K562 (cell line): ENCODE measurements at regions of chr2 and their contacts with region 1.

Region 1: DNA sequence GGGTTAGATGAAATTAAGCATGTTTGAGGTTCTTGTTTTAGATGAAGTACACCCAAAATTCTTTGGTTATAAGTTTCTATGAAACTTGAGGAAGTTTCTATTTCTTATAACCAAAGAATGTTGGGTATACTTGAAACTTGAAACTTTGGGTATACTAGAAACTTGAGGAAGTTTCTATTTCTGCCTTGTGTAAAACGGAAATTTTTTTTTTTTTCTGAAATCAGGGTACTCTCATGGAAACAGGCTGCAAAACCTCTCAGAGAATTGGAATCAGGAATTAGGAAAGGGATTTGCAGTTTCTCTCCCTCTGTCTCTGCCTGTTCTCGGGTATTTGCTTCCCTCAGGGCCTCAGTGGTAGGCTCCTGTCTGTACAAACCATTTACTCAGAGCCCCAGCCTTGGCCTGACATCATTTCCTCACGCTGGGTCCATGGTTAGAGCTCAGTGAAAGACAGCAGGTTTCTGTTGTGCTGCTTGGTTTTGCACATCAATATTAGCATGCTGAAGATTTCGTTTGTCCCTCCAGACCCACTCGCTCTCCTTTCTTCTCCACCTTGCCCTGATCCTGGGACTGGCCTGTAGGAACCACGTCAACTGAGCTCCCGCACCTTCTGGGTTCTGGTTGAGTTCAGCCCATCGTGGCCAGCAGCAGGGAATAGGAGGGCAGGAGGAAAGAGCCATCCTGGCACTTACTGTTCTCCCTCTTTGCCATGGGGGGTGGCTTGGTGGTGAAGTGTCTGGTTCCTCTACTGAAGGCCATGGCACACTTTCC is 106.4 kb downstream of the POLR1A start:
- DNase-seq: peak in 1 of 4 experiments; percentile 31
- ATAC-seq: 0 out of 3 replicates have a peak, but pooled peaks have one; percentile 2
- H3K4me3 ChIP-seq: no peak overlapping the region
- H3K27ac ChIP-seq: peak overlapping the region; percentile 46
- H3K4me1 ChIP-seq: peaks cover 74 to 93% of the 10 kb centered on the region in 2 experiments
- H3K27me3 ChIP-seq: no peaks in the 10 kb centered on the region
- CTCF ChIP-seq: no peak
- EP300 ChIP-seq: no peak
- POLR2A ChIP-seq: no peak
- RAD21 ChIP-seq: no peak

Region 2: DNA sequence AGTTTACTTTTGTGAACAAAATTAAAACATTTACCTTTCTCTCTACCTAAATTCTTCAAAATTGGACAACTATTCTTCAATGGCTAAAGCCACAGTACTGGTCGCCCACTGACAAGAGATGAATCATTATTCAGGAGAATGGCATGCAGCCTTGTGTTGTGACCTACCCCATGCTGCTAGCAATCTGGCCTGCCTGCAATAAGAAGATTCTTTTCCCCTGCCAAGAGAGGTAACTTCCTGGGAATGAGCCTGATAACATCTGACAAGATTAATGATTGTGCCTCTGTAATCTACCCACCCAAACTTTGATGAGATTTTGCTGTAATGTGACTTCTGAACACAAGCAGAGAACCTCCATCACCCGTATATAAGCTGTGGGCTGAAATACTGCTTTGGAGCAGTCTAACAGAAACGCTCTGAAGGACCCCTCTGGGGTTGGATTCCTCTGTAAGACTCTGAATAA is 63.5 kb before region 1 on chr2:
- CTCF ChIA-PET with region 1: no interaction called
- POLR2A ChIA-PET with region 1: no interaction called
- in situ Hi-C with region 1: no loop called
- intact Hi-C with region 1: loop called (anchors 2 kb)
- DNase-seq: peak in 1 of 4 experiments; percentile 53
- ATAC-seq: no peak
- H3K4me3 ChIP-seq: no peak overlapping the region
- H3K27ac ChIP-seq: no peak overlapping the region
- H3K4me1 ChIP-seq: peaks cover 8 to 17% of the 10 kb centered on the region in 2 experiments; a peak in 4 of 5 replicates
- H3K27me3 ChIP-seq: no peaks in the 10 kb centered on the region
- CTCF ChIP-seq: no peak
- EP300 ChIP-seq: peak; percentile 16; the same call in 1 of the 2 replicates
- POLR2A ChIP-seq: no peak
- RAD21 ChIP-seq: no peak

Region 3: DNA sequence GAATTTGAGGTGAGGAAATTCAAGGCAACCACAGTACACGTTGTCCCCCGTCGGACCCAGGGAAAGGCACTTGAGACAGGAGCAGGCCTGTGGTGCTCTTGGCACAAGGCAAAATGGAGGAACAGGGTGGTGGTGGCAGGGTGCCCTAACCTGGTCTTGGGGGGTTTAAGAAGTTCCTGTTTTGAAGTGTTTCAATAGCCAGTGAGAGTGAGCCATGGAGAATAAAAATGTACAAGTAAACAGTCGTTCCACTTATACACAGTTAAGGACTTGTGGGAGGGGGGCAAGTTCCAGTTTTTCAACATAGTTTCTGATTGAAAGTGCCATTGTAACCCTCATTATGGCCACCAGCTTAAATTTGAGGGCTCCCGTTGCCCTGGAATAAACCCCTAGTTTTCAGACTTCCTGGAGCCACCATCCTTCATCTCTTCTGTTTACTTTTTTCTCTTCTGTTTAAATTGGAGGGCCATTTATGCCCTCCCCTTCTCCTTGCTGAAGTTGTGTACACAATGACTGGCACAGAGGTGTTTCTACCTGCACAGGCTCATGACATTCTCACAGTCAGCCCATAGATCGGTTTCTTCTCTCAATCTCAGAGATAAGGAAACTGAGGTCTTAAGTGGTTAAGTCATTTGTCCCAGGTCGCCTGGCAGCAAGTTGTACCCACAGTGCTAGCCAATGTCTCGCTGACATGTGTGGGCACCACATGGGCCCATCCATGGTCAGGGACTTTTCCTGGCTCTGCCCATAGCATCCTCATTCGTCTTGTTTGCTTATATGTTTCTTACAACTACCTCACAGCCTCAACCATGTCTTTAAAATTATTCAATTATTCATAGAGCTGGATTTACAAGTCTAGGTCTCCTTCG is 44.4 kb before region 1 on chr2:
- CTCF ChIA-PET with region 1: no interaction called
- POLR2A ChIA-PET with region 1: no interaction called
- in situ Hi-C with region 1: no loop called
- intact Hi-C with region 1: loop called (anchors 5 kb)
- DNase-seq: no peak
- ATAC-seq: no peak
- H3K4me3 ChIP-seq: no peak overlapping the region
- H3K27ac ChIP-seq: no peak overlapping the region; the same call in 2 of the 3 replicates
- H3K4me1 ChIP-seq: peaks cover 22 to 24% of the 10 kb centered on the region in 2 experiments
- H3K27me3 ChIP-seq: no peaks in the 10 kb centered on the region
- CTCF ChIP-seq: no peak
- EP300 ChIP-seq: no peak
- POLR2A ChIP-seq: no peak
- RAD21 ChIP-seq: no peak

Region 4: GRCh38 chr2:85988175-85988913 is 10.9 kb before region 1 on chr2:
- CTCF ChIA-PET with region 1: no interaction called
- POLR2A ChIA-PET with region 1: interaction called, 15 read pairs
- in situ Hi-C with region 1: no loop called
- intact Hi-C with region 1: no loop called
- DNase-seq: peak in 1 of 4 experiments; percentile 53
- ATAC-seq: peak; percentile 61
- H3K4me3 ChIP-seq: no peak overlapping the region
- H3K27ac ChIP-seq: peak overlapping the region; percentile 43; the same call in 1 of the 3 replicates
- H3K4me1 ChIP-seq: peaks cover 30 to 39% of the 10 kb centered on the region in 2 experiments
- H3K27me3 ChIP-seq: no peaks in the 10 kb centered on the region
- CTCF ChIP-seq: no peak
- EP300 ChIP-seq: no peak
- POLR2A ChIP-seq: no peak
- RAD21 ChIP-seq: no peak